MCF 10A (cell line): ENCODE measurements at regions of chr12 and their contacts with region 1.

Region 1: GRCh38 chr12:54368709-54369583 is 4.7 kb upstream of the GPR84 start:
- DNase-seq: peak; percentile 90
- H3K4me3 Mint-ChIP-seq: peak overlapping the region; percentile 66
- H3K27ac Mint-ChIP-seq: no peak overlapping the region
- H3K4me1 Mint-ChIP-seq: peaks cover 35% of the 10 kb centered on the region
- H3K27me3 Mint-ChIP-seq: no peaks in the 10 kb centered on the region
- CTCF ChIP-seq: peak; percentile 71

Region 2: GRCh38 chr12:54005853-54006686 is 362.9 kb before region 1 on chr12:
- CTCF ChIA-PET with region 1: no interaction called
- POLR2A ChIA-PET with region 1: no interaction called
- intact Hi-C with region 1: loop called (anchors 10 kb)
- DNase-seq: peak; percentile 88
- H3K4me3 Mint-ChIP-seq: no peak overlapping the region
- H3K27ac Mint-ChIP-seq: no peak overlapping the region
- H3K4me1 Mint-ChIP-seq: peaks cover 25% of the 10 kb centered on the region
- H3K27me3 Mint-ChIP-seq: no peaks in the 10 kb centered on the region
- CTCF ChIP-seq: peak; percentile 96

Region 3: GRCh38 chr12:54251667-54252284 is 117.2 kb before region 1 on chr12:
- CTCF ChIA-PET with region 1: interaction called, 19 read pairs
- POLR2A ChIA-PET with region 1: no interaction called
- intact Hi-C with region 1: no loop called
- DNase-seq: peak; percentile 58
- H3K4me3 Mint-ChIP-seq: no peak overlapping the region
- H3K27ac Mint-ChIP-seq: peak overlapping the region; percentile 69
- H3K4me1 Mint-ChIP-seq: no peaks in the 10 kb centered on the region
- H3K27me3 Mint-ChIP-seq: no peaks in the 10 kb centered on the region
- CTCF ChIP-seq: peak; percentile 68

Region 4: GRCh38 chr12:54337280-54337842 is 31.6 kb before region 1 on chr12:
- CTCF ChIA-PET with region 1: interaction called, 10 read pairs
- POLR2A ChIA-PET with region 1: interaction called, 3 read pairs
- intact Hi-C with region 1: no loop called
- DNase-seq: no peak
- H3K4me3 Mint-ChIP-seq: no peak overlapping the region
- H3K27ac Mint-ChIP-seq: no peak overlapping the region
- H3K4me1 Mint-ChIP-seq: peaks cover 13% of the 10 kb centered on the region
- H3K27me3 Mint-ChIP-seq: no peaks in the 10 kb centered on the region
- CTCF ChIP-seq: no peak

Region 5: GRCh38 chr12:54393207-54393609 is 24.3 kb after region 1 on chr12:
- CTCF ChIA-PET with region 1: interaction called, 41 read pairs
- POLR2A ChIA-PET with region 1: interaction called, 5 read pairs
- intact Hi-C with region 1: loop called (anchors 1 kb)
- DNase-seq: no peak
- H3K4me3 Mint-ChIP-seq: no peak overlapping the region
- H3K27ac Mint-ChIP-seq: peak overlapping the region; percentile 31
- H3K4me1 Mint-ChIP-seq: peaks cover 30% of the 10 kb centered on the region
- H3K27me3 Mint-ChIP-seq: no peaks in the 10 kb centered on the region
- CTCF ChIP-seq: no peak

Region 6: DNA sequence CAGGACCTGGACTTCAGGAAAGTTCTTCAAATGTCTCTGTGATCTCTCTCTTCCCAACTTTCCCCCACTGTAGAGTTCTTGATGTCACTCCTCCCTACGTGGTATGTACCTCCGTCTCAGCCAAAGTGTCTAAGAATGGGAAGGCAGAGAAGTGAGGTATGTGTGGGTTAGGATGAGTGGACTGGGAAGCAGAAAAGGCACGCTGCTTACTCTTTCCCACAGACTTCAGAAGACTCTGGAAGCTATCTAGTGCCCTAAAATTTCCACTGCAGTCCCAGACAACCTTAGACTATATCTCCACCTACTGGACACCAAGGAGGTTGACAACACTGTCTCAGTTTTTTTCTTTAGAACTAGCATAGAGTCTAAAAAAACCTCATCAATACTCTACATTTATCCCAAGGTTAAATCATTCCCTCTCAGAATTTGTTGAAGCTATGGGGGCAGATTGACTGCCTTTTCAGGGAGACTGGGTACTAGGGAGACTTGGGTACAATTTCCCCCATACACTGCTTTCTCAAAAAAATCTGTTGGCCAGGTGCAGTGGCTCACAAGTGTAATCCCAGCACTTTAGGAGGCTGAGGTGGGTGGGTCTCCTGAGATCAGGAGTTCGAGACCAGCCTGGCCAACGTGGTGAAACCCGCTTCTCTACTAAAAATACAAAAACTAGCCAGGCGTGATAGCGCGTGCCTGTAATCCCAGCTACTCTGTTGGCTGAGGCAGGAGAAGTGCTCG is 70.7 kb after region 1 on chr12:
- CTCF ChIA-PET with region 1: interaction called, 28 read pairs
- POLR2A ChIA-PET with region 1: no interaction called
- intact Hi-C with region 1: loop called (anchors 1 kb)
- DNase-seq: peak; percentile 73
- H3K4me3 Mint-ChIP-seq: no peak overlapping the region
- H3K27ac Mint-ChIP-seq: peak overlapping the region; percentile 22
- H3K4me1 Mint-ChIP-seq: peaks cover 13% of the 10 kb centered on the region
- H3K27me3 Mint-ChIP-seq: no peaks in the 10 kb centered on the region
- CTCF ChIP-seq: peak; percentile 91